Activated CD4-positive, alpha-beta memory T cell treated with anti-CD3 and anti-CD28 coated beads, Interleukin-2, amount 10 ng/mL, durations not matched to agents 7 days and 5 days (primary cell): ENCODE measurements at regions of chr11 and their contacts with region 1.

Region 1: DNA sequence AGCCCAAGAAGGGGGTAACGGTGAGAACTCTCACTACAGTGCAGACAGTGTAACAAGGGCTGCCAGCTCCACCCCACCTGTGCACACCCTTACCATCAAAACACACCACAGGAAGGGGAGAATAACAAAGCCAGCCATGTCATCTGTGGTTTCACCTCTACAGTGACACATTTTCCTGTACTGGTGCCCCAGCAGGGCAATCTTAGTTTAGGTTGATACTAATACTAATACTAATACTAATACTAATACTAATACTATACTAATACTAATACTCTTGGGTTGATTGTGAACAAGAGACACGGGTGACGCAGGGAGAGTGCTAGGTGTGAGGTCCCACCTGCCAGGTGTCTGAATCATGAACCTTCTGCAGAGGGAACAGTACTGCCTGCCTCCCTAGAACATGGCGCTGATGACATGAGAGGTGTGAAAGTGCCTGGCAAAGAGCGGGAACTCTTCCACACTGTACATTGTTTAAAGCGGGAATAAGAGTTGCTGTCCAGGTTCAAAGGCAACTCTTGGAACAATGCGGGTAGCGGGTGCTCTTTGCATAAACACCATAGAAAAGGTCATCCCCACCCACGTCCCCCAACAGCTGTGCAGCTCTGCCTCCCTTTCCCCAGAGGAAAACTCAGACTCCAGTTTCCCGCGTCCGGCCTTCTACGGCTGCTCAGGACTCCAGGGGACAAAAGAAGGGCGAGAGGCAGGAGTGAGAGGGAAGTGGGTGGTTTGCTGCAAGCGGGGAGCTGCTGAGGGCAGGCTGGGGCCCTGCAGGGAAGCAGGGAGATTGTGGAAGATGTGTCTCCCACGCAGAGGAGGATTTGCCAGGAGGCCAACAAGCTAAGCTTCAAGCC is 25.0 kb upstream of the TMPRSS4 start:
- DNase-seq: peak; percentile 81
- H3K4me3 Mint-ChIP-seq: peak overlapping the region; percentile 45
- H3K27ac Mint-ChIP-seq: peak overlapping the region; percentile 95
- H3K4me1 Mint-ChIP-seq: peaks cover 62% of the 10 kb centered on the region
- H3K27me3 Mint-ChIP-seq: peaks cover 4% of the 10 kb centered on the region

Region 2: DNA sequence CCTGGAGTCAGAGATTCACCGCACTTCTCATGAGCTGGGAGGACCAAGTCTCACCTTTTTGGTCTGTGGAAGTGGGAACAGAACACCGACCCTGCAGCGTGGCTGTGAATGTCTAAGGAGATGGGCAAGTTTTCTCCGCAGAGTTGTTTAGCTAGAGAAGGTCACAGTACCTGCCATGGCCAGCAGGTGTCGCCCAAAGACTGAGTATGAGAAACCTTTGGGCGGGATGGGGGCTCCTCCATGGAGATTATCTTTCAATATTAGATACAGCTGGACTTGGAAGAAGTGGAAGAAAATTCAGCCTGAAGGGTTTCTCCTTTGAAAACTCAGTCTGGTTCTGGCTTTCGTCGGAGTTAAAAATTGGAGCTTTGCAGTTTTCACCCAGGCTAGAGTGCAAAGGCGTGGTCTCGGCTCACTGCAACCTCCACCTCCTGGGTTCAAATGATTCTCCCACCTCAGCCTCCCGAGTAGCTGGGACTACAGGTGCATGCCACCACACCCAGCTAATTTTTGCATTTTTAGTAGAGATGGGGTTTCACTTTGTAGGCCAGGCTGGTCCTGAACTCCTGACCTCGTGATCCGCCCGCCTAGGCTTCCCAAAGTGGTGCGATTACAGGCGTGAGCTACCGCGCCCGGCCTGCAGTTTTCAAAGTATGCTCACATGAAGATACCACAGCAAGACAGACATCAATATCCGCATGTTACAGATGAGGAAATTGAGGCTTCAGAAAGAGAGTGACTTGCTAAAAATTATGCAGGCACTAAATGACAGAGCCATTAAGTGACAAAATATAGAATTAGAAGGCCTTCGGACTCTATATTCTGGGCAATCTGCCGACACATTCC is 244.1 kb before region 1 on chr11:
- CTCF ChIA-PET with region 1: interaction called, 81 read pairs
- POLR2A ChIA-PET with region 1: interaction called, 8 read pairs
- DNase-seq: peak; percentile 78
- H3K4me3 Mint-ChIP-seq: no peak overlapping the region
- H3K27ac Mint-ChIP-seq: no peak overlapping the region
- H3K4me1 Mint-ChIP-seq: peaks cover 18% of the 10 kb centered on the region
- H3K27me3 Mint-ChIP-seq: peaks cover 26% of the 10 kb centered on the region

Region 3: DNA sequence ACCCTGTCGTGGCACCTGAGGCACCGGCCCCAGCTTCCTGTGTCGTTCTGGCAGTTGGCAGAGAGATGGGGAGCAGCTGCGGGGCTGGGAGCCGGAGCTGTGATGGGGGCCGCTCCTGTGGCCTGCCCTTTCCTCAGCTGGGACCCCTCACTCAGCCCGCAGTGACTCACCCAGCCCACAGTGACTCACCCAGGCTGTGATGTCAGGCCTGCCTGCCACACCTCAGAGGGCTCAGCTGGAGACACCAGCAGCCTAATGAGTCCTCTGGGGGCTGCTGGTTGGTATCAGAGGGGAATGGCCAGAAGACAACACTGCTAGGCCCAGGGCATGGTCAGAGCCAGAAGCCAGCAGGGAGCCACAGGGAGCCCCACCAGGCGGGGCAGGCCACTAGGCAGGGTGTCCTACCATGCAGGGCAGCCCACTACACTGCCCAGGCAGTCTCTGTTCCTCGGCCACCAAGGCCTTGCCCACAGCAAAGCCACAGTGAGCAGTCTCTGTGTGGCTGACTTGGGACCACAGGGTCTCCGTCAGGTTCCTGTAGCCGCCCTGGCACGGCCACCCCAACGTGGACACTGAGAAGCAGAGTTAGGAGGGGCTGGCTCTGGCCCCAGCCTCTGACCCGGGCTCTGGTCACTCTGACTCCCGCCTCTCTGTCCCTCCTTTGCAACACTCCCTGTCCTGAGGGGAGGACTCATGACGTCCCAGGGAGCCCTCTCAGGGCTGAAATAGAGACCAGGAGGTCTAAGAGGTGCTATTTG is 223.0 kb before region 1 on chr11:
- CTCF ChIA-PET with region 1: interaction called, 32 read pairs
- POLR2A ChIA-PET with region 1: interaction called, 4 read pairs
- DNase-seq: peak; percentile 85
- H3K4me3 Mint-ChIP-seq: no peak overlapping the region
- H3K27ac Mint-ChIP-seq: peak overlapping the region; percentile 74
- H3K4me1 Mint-ChIP-seq: peaks cover 53% of the 10 kb centered on the region
- H3K27me3 Mint-ChIP-seq: no peaks in the 10 kb centered on the region

Region 4: GRCh38 chr11:117851106-117851505 is 200.7 kb before region 1 on chr11:
- CTCF ChIA-PET with region 1: interaction called, 103 read pairs
- POLR2A ChIA-PET with region 1: no interaction called
- DNase-seq: no peak
- H3K4me3 Mint-ChIP-seq: no peak overlapping the region
- H3K27ac Mint-ChIP-seq: no peak overlapping the region
- H3K4me1 Mint-ChIP-seq: peaks cover 8% of the 10 kb centered on the region
- H3K27me3 Mint-ChIP-seq: peaks cover 30% of the 10 kb centered on the region

Region 5: DNA sequence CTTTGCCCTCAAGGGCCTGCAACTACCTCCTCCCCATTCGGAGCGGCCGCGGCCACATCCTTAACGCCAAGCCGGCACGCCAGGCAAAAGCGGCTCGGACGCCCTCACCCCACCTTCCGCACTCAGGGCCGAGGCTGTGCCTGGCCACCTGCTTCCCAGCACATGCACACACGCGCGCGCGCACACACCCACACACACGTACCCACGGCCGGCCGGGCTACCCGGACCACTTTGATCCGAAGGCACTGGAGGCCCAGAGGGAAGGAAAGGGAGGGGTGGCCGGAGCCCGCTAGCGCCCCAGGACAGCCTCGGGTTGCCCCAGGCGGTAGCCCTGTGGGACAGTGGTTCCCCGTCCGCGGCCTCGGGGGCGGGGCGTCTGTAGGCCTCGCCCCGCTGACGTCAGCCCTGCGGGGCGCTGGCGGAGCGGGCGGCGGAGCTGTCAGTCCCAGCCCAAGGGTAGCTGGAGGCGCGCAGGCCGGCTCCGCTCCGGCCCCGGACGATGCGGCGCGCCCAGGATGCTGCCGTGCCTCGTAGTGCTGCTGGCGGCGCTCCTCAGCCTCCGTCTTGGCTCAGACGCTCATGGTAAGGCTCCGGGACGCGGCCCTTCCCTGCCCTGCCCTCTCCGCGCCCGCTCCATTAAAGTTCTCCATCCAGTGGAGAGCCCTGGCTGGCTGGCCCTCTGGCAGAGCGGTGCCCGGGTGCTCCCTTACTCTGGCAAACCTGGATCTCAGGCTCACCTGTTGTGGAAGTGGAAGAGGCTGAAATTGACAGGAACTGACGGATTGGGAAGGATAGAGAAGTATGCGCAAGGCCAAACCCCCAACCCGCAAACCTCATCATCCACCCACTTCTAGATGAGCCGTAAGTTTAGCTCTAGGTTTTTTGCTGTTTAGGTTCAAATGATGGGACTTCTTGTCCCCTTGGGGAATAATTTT is 65.6 kb before region 1 on chr11 and contains the start of gene IL10RA:
- CTCF ChIA-PET with region 1: interaction called, 192 read pairs
- POLR2A ChIA-PET with region 1: interaction called, 681 read pairs
- DNase-seq: peak; percentile 90
- H3K4me3 Mint-ChIP-seq: peak within 1 kb of the TSS; percentile 89
- H3K27ac Mint-ChIP-seq: peak within 1 kb of the TSS; percentile 85
- H3K4me1 Mint-ChIP-seq: peaks cover 61% of the 10 kb centered on the region
- H3K27me3 Mint-ChIP-seq: no peaks in the 10 kb centered on the region
- total RNA-seq, gene IL10RA: 286 to 291 TPM

Region 6: DNA sequence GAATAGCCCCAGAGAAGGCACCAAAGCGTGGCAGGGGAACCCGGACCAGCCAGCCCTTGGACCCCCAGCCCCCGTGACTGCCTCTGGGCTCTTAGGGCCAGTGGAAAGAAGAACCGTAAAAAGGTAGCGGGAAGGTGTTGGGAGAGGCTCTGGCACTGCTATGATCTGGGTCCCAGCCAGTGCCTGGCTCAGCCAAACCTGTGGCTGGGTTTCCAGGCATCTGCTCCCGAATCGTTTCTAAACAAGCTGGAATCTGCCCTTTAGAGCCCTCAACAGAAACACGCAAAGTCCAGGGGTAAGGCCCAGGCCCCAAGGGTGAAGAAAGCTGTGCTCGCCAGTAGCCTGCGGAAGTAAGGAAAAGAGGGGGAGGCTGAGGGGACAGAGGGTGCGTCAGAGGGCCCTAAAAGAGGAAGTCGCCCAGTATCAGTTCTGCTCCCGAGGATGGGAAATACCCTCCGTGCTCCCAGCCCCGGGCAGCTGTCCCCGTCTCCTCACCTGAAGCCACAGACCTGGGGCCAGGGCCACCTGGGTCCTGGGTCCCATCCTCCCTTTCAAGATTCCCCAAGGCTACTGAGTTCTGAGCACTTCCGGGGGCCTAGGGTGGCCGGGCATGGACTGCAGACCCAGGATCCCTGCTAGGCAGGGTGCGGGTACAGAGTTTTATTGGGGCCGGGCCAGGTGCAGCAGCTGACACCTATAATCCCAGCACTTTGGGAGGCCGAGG is 40.9 kb before region 1 on chr11:
- CTCF ChIA-PET with region 1: interaction called, 192 read pairs
- POLR2A ChIA-PET with region 1: interaction called, 681 read pairs
- DNase-seq: no peak
- H3K4me3 Mint-ChIP-seq: no peak overlapping the region
- H3K27ac Mint-ChIP-seq: no peak overlapping the region
- H3K4me1 Mint-ChIP-seq: peaks cover 98% of the 10 kb centered on the region
- H3K27me3 Mint-ChIP-seq: no peaks in the 10 kb centered on the region